Natural killer cell (primary cell): ENCODE measurements at regions of chr3 and their contacts with region 1.

Region 1: GRCh38 chr3:59575113-59576001 is 525.5 kb upstream of the CFAP20DC start:
- DNase-seq: peak; percentile 77 to 89
- ATAC-seq: peak; percentile 68 to 92 (median 73)
- H3K4me3 ChIP-seq: no peak overlapping the region
- H3K4me3 Mint-ChIP-seq: no peak overlapping the region
- H3K27ac ChIP-seq: no peak overlapping the region
- H3K27ac Mint-ChIP-seq: no peak overlapping the region
- H3K4me1 ChIP-seq: peaks cover 5% of the 10 kb centered on the region
- H3K4me1 Mint-ChIP-seq: no peaks in the 10 kb centered on the region
- H3K27me3 ChIP-seq: no peaks in the 10 kb centered on the region
- H3K27me3 Mint-ChIP-seq: peaks cover under 1 to 6% of the 10 kb centered on the region in 2 donors
- CTCF ChIP-seq: peak; percentile 98

Region 2: GRCh38 chr3:59212128-59212779 is 363.1 kb before region 1 on chr3:
- intact Hi-C with region 1: loop called (anchors 10 kb)
- DNase-seq: peak in 1 of 2 donors; percentile 67
- ATAC-seq: peak; percentile 64 to 83 (median 77)
- H3K4me3 ChIP-seq: no peak overlapping the region
- H3K4me3 Mint-ChIP-seq: no peak overlapping the region
- H3K27ac ChIP-seq: no peak overlapping the region
- H3K27ac Mint-ChIP-seq: no peak overlapping the region
- H3K4me1 ChIP-seq: no peaks in the 10 kb centered on the region
- H3K4me1 Mint-ChIP-seq: no peaks in the 10 kb centered on the region
- H3K27me3 ChIP-seq: no peaks in the 10 kb centered on the region
- H3K27me3 Mint-ChIP-seq: peaks cover 5 to 21% of the 10 kb centered on the region in 2 donors
- CTCF ChIP-seq: peak; percentile 67

Region 3: DNA sequence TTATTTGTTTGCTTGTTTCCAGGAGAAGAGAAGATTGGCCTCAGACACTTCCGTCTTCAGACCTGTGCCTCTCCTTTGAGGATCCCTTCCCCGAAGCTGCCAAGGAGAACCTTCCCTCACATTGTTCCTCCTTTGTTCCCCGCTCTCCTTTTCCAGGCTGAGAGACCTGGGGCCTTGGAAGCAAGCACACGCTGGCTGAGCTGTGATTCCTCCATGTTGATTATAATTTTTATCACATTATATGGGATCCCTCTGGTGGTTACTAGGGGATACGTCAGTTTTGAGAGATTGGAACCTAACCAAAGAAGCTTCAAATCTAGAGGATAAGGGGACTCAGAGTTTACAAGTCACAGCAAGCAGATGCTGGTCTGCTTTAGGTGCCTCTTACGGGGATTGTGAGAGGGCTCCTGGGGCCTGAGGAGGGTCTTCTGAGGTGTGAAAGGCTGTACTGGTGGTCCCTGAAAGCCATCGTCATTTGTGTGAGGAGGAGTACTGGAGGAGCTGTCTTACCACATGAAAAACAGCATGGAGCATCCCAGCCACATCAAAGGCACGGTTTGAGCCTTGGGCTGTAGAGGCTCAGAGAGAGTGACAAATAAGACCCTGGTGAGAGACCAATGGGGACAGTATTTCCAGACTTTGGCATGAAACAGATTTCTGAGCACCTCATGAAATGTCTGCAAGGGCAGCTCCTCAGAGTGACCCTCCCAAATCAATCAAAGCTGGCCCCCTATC is 234.5 kb after region 1 on chr3:
- intact Hi-C with region 1: loop called (anchors 1 kb)
- DNase-seq: peak in 1 of 2 donors; percentile 33
- ATAC-seq: peak in 1 of 3 donors; percentile 26
- H3K4me3 ChIP-seq: no peak overlapping the region
- H3K4me3 Mint-ChIP-seq: no peak overlapping the region
- H3K27ac ChIP-seq: no peak overlapping the region
- H3K27ac Mint-ChIP-seq: no peak overlapping the region
- H3K4me1 ChIP-seq: peaks cover 3% of the 10 kb centered on the region
- H3K4me1 Mint-ChIP-seq: peaks cover 0 to 7% of the 10 kb centered on the region in 2 donors
- H3K27me3 ChIP-seq: no peaks in the 10 kb centered on the region
- H3K27me3 Mint-ChIP-seq: peaks cover 0 to 2% of the 10 kb centered on the region in 2 donors
- CTCF ChIP-seq: peak; percentile 24

Region 4: DNA sequence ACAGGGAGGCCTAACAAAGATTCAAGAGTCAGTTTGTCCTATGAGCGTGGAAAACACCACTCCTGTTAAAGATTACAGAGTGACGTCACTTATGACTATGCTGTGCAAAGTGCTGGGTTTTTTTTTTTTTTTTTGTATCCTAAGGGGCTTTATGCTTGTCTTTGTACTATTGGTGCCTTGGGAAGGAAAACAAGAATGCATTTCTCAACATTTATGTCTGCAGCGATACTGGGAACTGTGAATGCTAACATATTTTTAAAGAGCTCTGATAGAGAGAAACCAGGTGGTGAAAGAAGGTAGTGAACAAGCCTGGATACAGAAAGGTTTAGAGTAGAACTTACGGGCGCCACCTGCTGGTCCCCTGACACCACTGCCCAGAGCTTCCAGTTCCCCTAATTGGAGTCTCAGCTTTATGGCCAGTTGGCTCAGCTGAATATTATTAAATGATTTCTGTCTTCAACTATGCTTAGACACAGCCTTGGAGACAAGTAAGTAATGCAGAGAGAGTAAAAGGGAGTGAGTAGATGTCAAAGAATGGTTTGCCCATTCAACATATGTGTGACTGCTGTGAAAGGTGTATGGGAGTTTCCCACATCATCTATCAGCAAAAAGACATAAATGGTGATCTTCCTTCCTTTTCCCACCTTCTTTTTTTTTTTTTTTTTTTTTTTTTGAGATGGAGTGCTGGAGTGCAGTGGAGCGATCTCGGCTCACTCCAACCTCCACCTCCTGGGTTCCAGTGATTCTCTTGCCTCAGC is 282.4 kb after region 1 on chr3:
- intact Hi-C with region 1: loop called (anchors 1 kb)
- DNase-seq: peak; percentile 65 to 86
- ATAC-seq: peak; percentile 83 to 99 (median 96)
- H3K4me3 ChIP-seq: no peak overlapping the region
- H3K4me3 Mint-ChIP-seq: peak overlapping the region; percentile 61
- H3K27ac ChIP-seq: no peak overlapping the region
- H3K27ac Mint-ChIP-seq: no peak overlapping the region
- H3K4me1 ChIP-seq: no peaks in the 10 kb centered on the region
- H3K4me1 Mint-ChIP-seq: peaks cover 5 to 10% of the 10 kb centered on the region in 2 donors
- H3K27me3 ChIP-seq: no peaks in the 10 kb centered on the region
- H3K27me3 Mint-ChIP-seq: no peaks in the 10 kb centered on the region
- CTCF ChIP-seq: peak; percentile 90

Region 5: DNA sequence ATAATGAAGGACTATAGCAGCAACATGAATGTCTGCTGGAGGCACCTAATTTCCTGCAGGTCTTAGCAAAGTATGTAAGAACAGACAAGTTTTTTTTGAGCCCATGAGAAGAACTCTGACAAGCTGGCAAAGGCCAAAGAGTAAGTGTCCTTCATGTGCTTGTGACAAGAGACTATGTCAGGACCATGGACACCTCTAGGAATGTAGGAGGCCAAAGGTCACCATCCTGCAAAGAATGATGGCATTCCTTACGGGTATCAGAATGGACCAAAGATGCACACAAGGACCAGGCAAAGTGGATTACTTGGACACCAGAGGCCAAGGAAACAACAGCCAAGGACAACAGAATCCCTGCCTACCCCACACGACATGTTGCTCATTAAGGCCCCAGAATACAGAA is 332.9 kb after region 1 on chr3:
- intact Hi-C with region 1: no loop called
- DNase-seq: no peak
- ATAC-seq: no peak
- H3K4me3 ChIP-seq: no peak overlapping the region
- H3K4me3 Mint-ChIP-seq: no peak overlapping the region
- H3K27ac ChIP-seq: no peak overlapping the region
- H3K27ac Mint-ChIP-seq: no peak overlapping the region
- H3K4me1 ChIP-seq: no peaks in the 10 kb centered on the region
- H3K4me1 Mint-ChIP-seq: no peaks in the 10 kb centered on the region
- H3K27me3 ChIP-seq: no peaks in the 10 kb centered on the region
- H3K27me3 Mint-ChIP-seq: no peaks in the 10 kb centered on the region
- CTCF ChIP-seq: no peak

Region 6: DNA sequence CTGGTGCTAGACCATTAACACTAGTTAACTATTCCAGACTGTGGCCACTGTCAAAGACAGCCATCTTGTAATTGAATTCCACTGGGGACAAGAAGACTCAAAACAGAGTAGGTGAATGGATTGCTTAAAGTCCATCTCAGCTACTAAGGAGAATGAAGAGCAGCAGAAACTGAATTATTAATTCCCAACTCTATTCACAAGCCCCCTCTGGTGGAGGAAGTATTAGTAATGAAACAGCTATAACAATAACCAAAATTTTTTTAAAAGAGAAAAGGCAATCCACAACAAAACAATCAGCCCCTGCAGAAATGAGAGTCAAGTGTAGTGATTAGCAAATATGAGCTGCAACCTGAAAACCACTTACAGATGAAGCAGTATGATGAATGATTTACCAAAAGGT is 1373.1 kb after region 1 on chr3:
- intact Hi-C with region 1: loop called (anchors 5 kb)
- DNase-seq: peak in 1 of 2 donors; percentile 11
- ATAC-seq: no peak
- H3K4me3 ChIP-seq: no peak overlapping the region
- H3K4me3 Mint-ChIP-seq: no peak overlapping the region
- H3K27ac ChIP-seq: no peak overlapping the region
- H3K27ac Mint-ChIP-seq: no peak overlapping the region
- H3K4me1 ChIP-seq: no peaks in the 10 kb centered on the region
- H3K4me1 Mint-ChIP-seq: no peaks in the 10 kb centered on the region
- H3K27me3 ChIP-seq: no peaks in the 10 kb centered on the region
- H3K27me3 Mint-ChIP-seq: no peaks in the 10 kb centered on the region
- CTCF ChIP-seq: no peak

Region 7: GRCh38 chr3:61381745-61382392 is 1806.5 kb after region 1 on chr3:
- intact Hi-C with region 1: loop called (anchors 1 kb)
- DNase-seq: peak in 1 of 2 donors; percentile 59
- ATAC-seq: peak; percentile 44 to 59 (median 46)
- H3K4me3 ChIP-seq: no peak overlapping the region
- H3K4me3 Mint-ChIP-seq: no peak overlapping the region
- H3K27ac ChIP-seq: no peak overlapping the region
- H3K27ac Mint-ChIP-seq: no peak overlapping the region
- H3K4me1 ChIP-seq: no peaks in the 10 kb centered on the region
- H3K4me1 Mint-ChIP-seq: peaks cover 4 to 6% of the 10 kb centered on the region in 2 donors
- H3K27me3 ChIP-seq: no peaks in the 10 kb centered on the region
- H3K27me3 Mint-ChIP-seq: peaks cover 5 to 26% of the 10 kb centered on the region in 2 donors
- CTCF ChIP-seq: peak; percentile 74